ENCODE measurements at regions of chr7 and their contacts with region 1.

Region 1: GRCh38 chr7:44240983-44241510 is 40.3 kb downstream of the YKT6 start:
- DNase-seq: peak; percentile 35 to 87
- H3K4me3 ChIP-seq: peak overlapping the region; percentile 11 to 38
- H3K27ac ChIP-seq: no peak overlapping the region
- H3K4me1 ChIP-seq: no peaks in the 10 kb centered on the region
- H3K27me3 ChIP-seq: no peaks in the 10 kb centered on the region
- CTCF ChIP-seq: peak; percentile 71 to 83 (median 80)

Region 2: DNA sequence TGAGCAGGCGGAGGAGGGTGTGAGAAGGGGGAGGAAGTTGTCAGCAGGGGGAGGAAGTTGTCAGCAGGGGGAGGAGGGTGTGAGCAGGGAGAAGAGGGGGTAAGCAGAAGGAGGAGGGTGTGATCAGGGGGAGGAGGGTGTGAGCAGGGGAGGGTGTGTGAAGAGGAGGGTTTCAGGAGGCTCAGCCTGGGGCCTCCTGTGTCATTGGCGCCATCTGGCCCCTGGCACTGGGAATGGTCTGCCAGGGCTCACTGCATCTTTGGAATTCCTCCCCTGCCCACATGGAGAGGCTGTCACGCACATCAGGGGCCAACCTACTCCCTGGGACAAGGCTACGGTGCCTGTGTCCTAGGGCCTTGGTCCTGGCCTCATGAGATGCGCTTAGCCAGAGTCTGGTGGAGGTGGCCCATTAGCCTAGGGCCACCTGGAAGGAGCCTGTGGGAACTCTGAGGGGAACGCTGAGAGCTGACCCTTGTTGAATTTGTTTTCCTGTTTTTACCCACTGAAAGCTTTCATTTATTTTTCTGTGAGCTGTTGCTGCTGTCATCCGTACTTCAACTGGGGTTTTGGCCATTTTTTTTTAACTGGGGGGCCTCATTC is 66.4 kb after region 1 on chr7:
- intact Hi-C with region 1: loop called (anchors 5 kb)
- DNase-seq: peak in 1 of 2 donors; percentile 39
- H3K4me3 ChIP-seq: no peak overlapping the region
- H3K27ac ChIP-seq: no peak overlapping the region
- H3K4me1 ChIP-seq: no peaks in the 10 kb centered on the region
- H3K27me3 ChIP-seq: no peaks in the 10 kb centered on the region
- CTCF ChIP-seq: peak in 1 of 3 experiments; percentile 19

Region 3: DNA sequence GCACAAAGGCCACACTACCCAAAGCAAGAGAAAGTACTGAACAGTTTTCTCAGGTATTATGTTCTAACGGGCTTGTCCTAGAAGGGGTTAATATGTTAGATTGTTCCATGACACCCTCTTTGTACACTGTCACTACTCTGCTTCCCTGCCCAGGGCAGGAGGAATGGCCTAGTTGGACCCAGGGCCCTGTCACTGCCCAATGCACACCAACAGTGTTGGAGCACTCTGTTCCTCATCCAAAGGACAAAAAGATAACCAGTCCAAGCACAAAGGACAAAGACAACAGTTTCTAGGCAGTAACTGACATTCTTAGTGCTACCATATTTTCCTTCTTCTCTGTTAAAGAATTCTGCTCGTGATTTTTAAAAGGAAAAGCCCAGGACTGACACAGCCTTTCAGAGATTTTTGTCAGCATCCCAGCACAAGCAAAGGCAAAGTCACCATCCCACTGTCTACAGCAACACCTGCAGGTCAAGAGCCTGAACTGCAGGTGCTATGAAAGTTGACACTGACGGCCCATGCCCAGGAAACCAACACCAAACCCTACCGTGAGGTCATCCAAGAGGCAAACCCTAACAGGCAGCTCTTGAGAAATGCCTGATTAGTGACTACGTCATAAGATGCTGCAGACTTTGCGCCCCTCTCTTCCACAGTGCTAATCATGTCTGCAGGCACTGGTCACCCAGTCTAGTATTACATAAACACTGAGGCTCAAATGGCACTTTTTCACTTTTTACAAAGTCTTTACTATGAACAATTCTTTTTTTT is 236.2 kb after region 1 on chr7:
- intact Hi-C with region 1: loop called (anchors 1 kb)
- DNase-seq: peak; percentile 17 to 83
- H3K4me3 ChIP-seq: no peak overlapping the region
- H3K27ac ChIP-seq: peak overlapping the region; percentile 31 to 40
- H3K4me1 ChIP-seq: peaks cover 0 to 8% of the 10 kb centered on the region in 2 donors
- H3K27me3 ChIP-seq: no peaks in the 10 kb centered on the region
- CTCF ChIP-seq: peak; percentile 92 to 94 (median 94)

Region 4: DNA sequence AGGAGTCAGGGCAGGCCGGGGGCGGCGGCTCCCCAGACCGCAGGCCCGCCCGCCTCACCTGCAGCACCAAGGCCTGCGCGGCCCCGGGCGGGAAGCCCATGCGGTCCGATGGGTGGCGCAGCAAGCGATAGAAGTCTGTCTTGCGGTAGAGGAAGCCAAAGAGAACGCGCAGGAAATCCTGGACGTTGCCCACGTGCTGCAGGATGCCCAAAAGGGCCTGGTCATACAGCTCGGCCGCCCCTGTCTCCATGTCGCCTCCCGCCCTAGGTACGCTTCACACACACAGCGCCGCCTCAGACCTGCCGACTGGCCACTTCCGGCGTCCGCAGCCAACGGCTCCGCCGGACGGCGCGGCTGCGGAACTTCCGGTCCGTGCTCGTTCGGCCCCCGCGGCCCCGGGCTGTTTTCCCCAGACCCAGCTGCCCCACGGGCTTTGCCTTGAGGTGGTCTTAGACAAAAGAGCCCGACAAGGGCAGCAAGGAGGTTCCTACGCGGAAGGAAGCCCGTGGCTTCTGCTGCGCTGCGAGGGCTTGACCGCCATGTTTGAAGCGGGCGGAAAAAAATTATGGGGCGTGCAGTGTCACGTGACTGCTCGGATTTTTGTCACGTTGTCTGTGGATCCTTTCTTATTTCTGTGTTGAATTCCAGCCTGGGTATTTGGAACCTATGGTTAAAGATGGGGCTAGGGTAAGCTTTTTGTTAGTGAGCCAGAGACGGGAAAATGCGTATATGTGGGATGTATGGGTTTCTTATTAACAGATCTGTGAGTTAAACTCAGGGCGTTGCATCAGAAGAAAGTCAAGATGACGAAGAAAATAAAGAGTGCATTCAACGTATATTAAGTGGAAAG is 249.5 kb after region 1 on chr7 and contains the start of gene NUDCD3:
- intact Hi-C with region 1: loop called (anchors 5 kb)
- DNase-seq: peak; percentile 28 to 89
- H3K4me3 ChIP-seq: peak within 1 kb of the TSS; percentile 89 to 95
- H3K27ac ChIP-seq: peak within 1 kb of the TSS; percentile 97
- H3K4me1 ChIP-seq: peaks cover 4 to 25% of the 10 kb centered on the region in 2 donors
- H3K27me3 ChIP-seq: no peaks in the 10 kb centered on the region
- CTCF ChIP-seq: peak in 2 of 3 experiments; percentile 17 to 30
- total RNA-seq, gene NUDCD3: 39.3 TPM

Region 5: GRCh38 chr7:44565097-44565794 is 324.2 kb after region 1 on chr7:
- intact Hi-C with region 1: loop called (anchors 2 kb)
- DNase-seq: peak in 1 of 2 donors; percentile 76
- H3K4me3 ChIP-seq: no peak overlapping the region
- H3K27ac ChIP-seq: no peak overlapping the region
- H3K4me1 ChIP-seq: no peaks in the 10 kb centered on the region
- H3K27me3 ChIP-seq: no peaks in the 10 kb centered on the region
- CTCF ChIP-seq: peak; percentile 83 to 97 (median 96)

Measured in ascending aorta (tissue), 2 donors.